Heart right ventricle (tissue), 16 donors: ENCODE measurements at regions of chr16 and their contacts with region 1.

Region 1: DNA sequence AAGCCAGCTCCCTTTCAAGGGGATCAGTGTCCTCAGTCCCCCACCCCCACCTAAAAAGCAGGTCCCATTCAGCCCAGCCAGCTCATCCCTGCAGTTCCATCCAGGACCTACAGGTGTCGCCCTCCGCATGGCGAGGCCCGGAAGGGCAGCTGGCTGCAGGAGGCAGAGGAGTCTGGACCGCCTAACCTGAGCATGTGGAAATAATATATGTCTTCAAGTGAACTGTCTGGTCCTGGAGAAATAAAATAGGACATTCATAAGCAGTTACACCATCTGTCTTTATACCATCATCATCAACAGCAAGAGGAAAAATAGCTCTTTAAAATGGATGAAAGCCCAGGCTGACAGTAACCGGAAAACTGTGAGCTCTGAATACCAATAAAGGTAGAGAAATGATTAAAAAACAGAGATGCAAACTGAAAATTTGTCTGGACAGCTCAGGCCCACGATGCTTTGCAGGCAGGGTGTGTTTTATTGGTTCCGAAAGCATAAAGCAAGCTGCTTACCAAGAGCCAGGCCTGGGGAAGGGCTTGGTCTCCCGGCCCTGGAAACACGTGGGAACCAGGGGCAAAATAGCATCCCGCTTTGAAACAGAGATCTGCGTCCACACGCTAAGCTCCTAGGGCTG is 215.2 kb downstream of the ZFHX3 start:
- DNase-seq: peak; percentile 81 to 86
- ATAC-seq: peak; percentile 82 to 93 (median 92)
- H3K4me3 ChIP-seq: no peak overlapping the region
- H3K27ac ChIP-seq: peak overlapping the region in 5 of 10 donors; percentile 6 to 45 (median 27)
- H3K4me1 ChIP-seq: peaks cover 0 to 28% (median 11%) of the 10 kb centered on the region in 9 donors
- H3K27me3 ChIP-seq: no peaks in the 10 kb centered on the region
- CTCF ChIP-seq: peak; percentile 90 to 99 (median 95)

Region 2: DNA sequence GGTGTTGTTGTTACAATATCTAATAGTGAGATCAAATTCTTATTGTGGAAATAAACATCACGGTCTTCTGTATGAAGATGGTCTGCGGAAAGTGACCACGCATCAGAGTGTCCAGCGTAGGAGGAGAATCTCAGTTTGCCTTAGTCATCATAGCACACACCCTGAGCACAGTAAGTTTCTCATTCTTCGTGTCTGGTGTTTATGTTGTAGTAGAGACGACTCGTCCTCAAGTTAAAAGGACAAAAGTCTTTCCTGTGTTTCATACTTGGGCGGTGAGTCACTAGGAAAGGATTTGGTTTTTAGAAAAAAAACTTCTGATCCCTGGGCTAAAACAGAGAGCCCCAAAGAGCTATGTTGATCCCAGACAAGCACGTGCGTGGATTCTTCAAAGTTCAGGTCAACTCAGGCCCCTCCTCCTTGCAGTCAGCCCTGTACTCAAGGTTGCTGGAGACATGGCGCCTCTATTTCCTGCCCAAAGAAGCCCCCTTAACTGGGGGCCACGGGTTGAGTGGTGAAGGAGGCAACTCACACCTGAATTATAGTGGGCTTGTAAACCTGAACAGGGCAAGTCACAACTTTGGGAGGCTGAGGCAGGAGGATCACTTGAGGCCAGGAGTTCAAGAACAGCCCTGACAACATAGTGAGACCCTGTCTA is 44.8 kb after region 1 on chr16:
- intact Hi-C with region 1: no loop called
- DNase-seq: no peak
- ATAC-seq: peak in 7 of 8 donors; percentile 40 to 82 (median 69)
- H3K4me3 ChIP-seq: no peak overlapping the region
- H3K27ac ChIP-seq: peak overlapping the region in 8 of 10 donors; percentile 28 to 67 (median 60)
- H3K4me1 ChIP-seq: peaks cover 9 to 62% (median 31%) of the 10 kb centered on the region in 9 donors
- H3K27me3 ChIP-seq: no peaks in the 10 kb centered on the region
- CTCF ChIP-seq: no peak

Region 3: DNA sequence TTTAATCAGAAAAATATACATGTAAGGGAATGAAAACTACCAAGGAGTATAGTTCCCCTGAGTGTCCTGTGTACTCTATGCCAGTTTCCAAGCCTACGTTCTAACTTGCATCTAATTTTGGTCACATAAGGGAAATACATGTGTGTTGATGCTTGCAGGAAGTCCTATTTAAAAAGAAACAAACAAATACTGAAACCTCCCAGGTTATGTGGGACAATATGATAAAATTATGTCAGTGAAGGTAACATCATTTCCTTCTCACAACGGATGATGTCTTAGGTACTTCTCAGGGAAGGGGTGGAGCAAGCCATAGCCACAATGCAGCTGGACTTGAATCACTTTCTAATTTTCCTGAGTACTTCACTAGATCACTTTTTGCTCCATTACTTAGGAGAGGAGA is 99.3 kb after region 1 on chr16:
- intact Hi-C with region 1: loop called in 1 of 10 experiments (anchors 5 kb)
- DNase-seq: no peak
- ATAC-seq: peak in 5 of 8 donors; percentile 17 to 51 (median 36)
- H3K4me3 ChIP-seq: no peak overlapping the region
- H3K27ac ChIP-seq: peak overlapping the region; percentile 3 to 78 (median 40)
- H3K4me1 ChIP-seq: peaks cover 0 to 70% (median 28%) of the 10 kb centered on the region in 9 donors
- H3K27me3 ChIP-seq: no peaks in the 10 kb centered on the region
- CTCF ChIP-seq: no peak

Region 4: DNA sequence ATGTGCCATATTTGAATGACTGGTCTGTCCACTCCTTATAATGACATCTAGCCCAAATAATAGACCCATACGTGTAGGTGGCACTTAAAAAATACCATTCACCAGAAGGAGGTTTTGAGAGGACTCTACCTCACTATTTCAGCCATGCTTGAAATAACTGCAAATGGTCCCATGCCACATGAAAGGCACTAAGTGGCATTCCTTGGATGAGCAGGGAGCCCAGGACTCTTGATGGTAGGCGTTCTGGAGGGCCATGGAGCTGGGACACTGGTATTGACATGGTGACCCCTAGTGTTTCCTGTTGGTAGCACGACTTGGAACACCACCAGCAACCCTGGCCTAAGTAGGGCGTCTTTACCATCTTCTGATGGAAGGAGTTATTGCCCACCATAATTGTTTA is 363.9 kb after region 1 on chr16:
- intact Hi-C with region 1: loop called (anchors 1 to 10 kb)
- DNase-seq: peak; percentile 48 to 67
- ATAC-seq: peak in 7 of 8 donors; percentile 61 to 94 (median 87)
- H3K4me3 ChIP-seq: no peak overlapping the region
- H3K27ac ChIP-seq: no peak overlapping the region
- H3K4me1 ChIP-seq: no peaks in the 10 kb centered on the region
- H3K27me3 ChIP-seq: peaks cover 0 to 1% (median 0%) of the 10 kb centered on the region in 7 donors
- CTCF ChIP-seq: peak; percentile 45 to 76 (median 70)